ENCODE measurements at regions of chr14 and their contacts with region 1.

Region 1: DNA sequence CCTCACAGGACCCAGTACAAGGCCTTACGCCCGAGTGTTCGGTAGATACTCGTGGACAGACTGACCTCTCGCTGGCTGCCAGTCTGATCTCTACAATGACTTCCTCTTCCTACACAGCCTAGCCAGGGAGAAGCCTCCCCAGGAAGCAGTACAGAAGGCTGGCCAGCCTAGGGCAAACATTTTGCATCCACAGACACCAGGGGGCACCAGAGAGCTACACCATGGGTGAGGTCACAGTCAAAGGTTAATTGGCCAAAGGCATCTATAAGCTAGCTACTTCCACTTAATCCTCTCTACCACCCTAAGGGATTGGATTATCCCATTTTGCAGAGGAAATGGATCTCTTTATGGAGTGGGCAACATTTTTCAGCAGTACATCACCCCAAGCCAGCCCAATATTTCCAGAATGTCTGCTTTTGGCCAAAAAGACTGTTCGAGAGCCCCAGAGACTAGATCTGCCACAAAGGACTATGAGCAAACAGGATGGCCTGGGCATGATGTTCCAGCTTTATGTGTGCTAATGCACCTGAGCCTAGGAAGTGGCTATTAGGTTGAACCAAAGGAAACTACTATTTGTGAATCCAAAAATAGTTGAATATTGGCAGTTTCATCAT is 14.6 kb upstream of the PNMA1 start:
- DNase-seq: peak; percentile 75 to 84 (median 80)
- H3K4me3 ChIP-seq: no peak overlapping the region
- H3K4me3 Mint-ChIP-seq: no peak overlapping the region
- H3K27ac ChIP-seq: peak overlapping the region; percentile 28
- H3K27ac Mint-ChIP-seq: peak overlapping the region; percentile 19 to 94 (median 84)
- H3K4me1 ChIP-seq: peaks cover 43% of the 10 kb centered on the region
- H3K4me1 Mint-ChIP-seq: peaks cover 12 to 40% (median 23%) of the 10 kb centered on the region in 4 donors
- H3K27me3 ChIP-seq: no peaks in the 10 kb centered on the region
- H3K27me3 Mint-ChIP-seq: no peaks in the 10 kb centered on the region

Region 2: GRCh38 chr14:73741386-73741875 is 12.6 kb after region 1 on chr14:
- CTCF ChIA-PET with region 1: interaction called, 121 read pairs
- POLR2A ChIA-PET with region 1: interaction called, 27 read pairs
- intact Hi-C with region 1: loop called (anchors 2 kb)
- DNase-seq: peak; percentile 56 to 87 (median 62)
- H3K4me3 ChIP-seq: peak overlapping the region; percentile 36 to 49
- H3K4me3 Mint-ChIP-seq: peak overlapping the region; percentile 79 to 90 (median 86)
- H3K27ac ChIP-seq: peak overlapping the region; percentile 66
- H3K27ac Mint-ChIP-seq: peak overlapping the region; percentile 93 to 98 (median 95)
- H3K4me1 ChIP-seq: peaks cover 77% of the 10 kb centered on the region
- H3K4me1 Mint-ChIP-seq: peaks cover 50 to 73% (median 61%) of the 10 kb centered on the region in 4 donors
- H3K27me3 ChIP-seq: no peaks in the 10 kb centered on the region
- H3K27me3 Mint-ChIP-seq: no peaks in the 10 kb centered on the region

Region 3: GRCh38 chr14:73771848-73772638 is 43.2 kb after region 1 on chr14:
- CTCF ChIA-PET with region 1: interaction called, 63 read pairs
- POLR2A ChIA-PET with region 1: interaction called, 5 read pairs
- intact Hi-C with region 1: loop called (anchors 1 kb)
- DNase-seq: peak; percentile 55 to 84 (median 61)
- H3K4me3 ChIP-seq: no peak overlapping the region
- H3K4me3 Mint-ChIP-seq: peak overlapping the region; percentile 55 to 88 (median 62)
- H3K27ac ChIP-seq: peak overlapping the region; percentile 50
- H3K27ac Mint-ChIP-seq: peak overlapping the region; percentile 83 to 96 (median 93)
- H3K4me1 ChIP-seq: peaks cover 78% of the 10 kb centered on the region
- H3K4me1 Mint-ChIP-seq: peaks cover 51 to 83% (median 66%) of the 10 kb centered on the region in 4 donors
- H3K27me3 ChIP-seq: no peaks in the 10 kb centered on the region
- H3K27me3 Mint-ChIP-seq: no peaks in the 10 kb centered on the region

Region 4: GRCh38 chr14:73785873-73786695 is 57.3 kb after region 1 on chr14:
- CTCF ChIA-PET with region 1: interaction called, 40 read pairs
- POLR2A ChIA-PET with region 1: interaction called, 35 read pairs
- intact Hi-C with region 1: loop called (anchors 1 kb)
- DNase-seq: peak; percentile 62 to 84 (median 64)
- H3K4me3 ChIP-seq: peak overlapping the region; percentile 89 to 90
- H3K4me3 Mint-ChIP-seq: peak overlapping the region; percentile 94 to 98 (median 96)
- H3K27ac ChIP-seq: peak overlapping the region; percentile 84
- H3K27ac Mint-ChIP-seq: peak overlapping the region; percentile 95 to 99 (median 97)
- H3K4me1 ChIP-seq: peaks cover 62% of the 10 kb centered on the region
- H3K4me1 Mint-ChIP-seq: peaks cover 53 to 72% (median 61%) of the 10 kb centered on the region in 4 donors
- H3K27me3 ChIP-seq: no peaks in the 10 kb centered on the region
- H3K27me3 Mint-ChIP-seq: no peaks in the 10 kb centered on the region

Region 5: DNA sequence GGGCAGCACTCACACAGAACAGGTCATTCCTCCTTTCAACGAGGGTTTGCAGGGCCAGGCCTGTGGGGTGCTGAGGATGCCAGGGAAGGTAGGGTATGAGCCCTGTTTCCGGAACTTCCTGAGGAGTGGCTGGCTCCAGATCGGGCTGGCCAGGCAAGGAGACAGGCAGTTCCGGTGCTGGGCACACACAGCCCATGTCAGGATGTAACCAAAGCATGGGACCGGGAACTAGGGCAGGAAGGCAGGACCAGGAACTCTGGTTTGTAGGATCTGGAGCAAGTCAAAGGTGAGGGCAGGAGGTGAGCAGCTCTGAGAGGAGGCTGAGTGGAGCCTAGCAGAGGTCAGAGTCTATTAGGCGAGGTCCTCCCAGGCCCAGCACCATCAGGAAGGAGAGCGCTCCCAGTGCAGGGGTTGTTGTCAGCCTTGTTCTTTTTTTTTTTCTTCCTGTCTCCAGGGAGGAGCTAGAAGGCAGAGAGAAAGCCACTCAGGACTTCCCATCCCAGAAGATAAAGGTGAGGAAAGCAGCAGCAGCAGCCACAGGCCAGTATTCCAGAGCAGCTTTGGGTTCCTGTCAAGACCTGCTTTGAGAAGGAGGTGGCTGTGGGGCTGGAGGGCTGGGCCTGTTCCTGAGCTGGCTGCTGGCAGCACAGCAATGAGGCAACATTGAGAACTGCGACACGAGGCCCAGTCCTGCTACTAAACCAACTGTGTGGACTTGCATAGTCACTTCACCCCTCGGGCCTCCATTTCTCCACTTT is 73.8 kb after region 1 on chr14:
- CTCF ChIA-PET with region 1: interaction called, 15 read pairs
- POLR2A ChIA-PET with region 1: no interaction called
- intact Hi-C with region 1: no loop called
- DNase-seq: no peak
- H3K4me3 ChIP-seq: no peak overlapping the region
- H3K4me3 Mint-ChIP-seq: no peak overlapping the region
- H3K27ac ChIP-seq: no peak overlapping the region
- H3K27ac Mint-ChIP-seq: peak overlapping the region in 2 of 7 donors; percentile 14 to 63
- H3K4me1 ChIP-seq: no peaks in the 10 kb centered on the region
- H3K4me1 Mint-ChIP-seq: no peaks in the 10 kb centered on the region
- H3K27me3 ChIP-seq: no peaks in the 10 kb centered on the region
- H3K27me3 Mint-ChIP-seq: no peaks in the 10 kb centered on the region

Region 6: GRCh38 chr14:73825551-73826188 is 96.8 kb after region 1 on chr14:
- CTCF ChIA-PET with region 1: interaction called, 272 read pairs
- POLR2A ChIA-PET with region 1: interaction called, 12 read pairs
- intact Hi-C with region 1: loop called (anchors 1 kb)
- DNase-seq: peak; percentile 68 to 75 (median 74)
- H3K4me3 ChIP-seq: no peak overlapping the region
- H3K4me3 Mint-ChIP-seq: no peak overlapping the region
- H3K27ac ChIP-seq: no peak overlapping the region
- H3K27ac Mint-ChIP-seq: peak overlapping the region in 1 of 7 donors; percentile 42
- H3K4me1 ChIP-seq: peaks cover 13% of the 10 kb centered on the region
- H3K4me1 Mint-ChIP-seq: peaks cover 7 to 11% (median 10%) of the 10 kb centered on the region in 4 donors
- H3K27me3 ChIP-seq: no peaks in the 10 kb centered on the region
- H3K27me3 Mint-ChIP-seq: no peaks in the 10 kb centered on the region